ENCODE measurements at regions of chr3 and their contacts with region 1.

Region 1: DNA sequence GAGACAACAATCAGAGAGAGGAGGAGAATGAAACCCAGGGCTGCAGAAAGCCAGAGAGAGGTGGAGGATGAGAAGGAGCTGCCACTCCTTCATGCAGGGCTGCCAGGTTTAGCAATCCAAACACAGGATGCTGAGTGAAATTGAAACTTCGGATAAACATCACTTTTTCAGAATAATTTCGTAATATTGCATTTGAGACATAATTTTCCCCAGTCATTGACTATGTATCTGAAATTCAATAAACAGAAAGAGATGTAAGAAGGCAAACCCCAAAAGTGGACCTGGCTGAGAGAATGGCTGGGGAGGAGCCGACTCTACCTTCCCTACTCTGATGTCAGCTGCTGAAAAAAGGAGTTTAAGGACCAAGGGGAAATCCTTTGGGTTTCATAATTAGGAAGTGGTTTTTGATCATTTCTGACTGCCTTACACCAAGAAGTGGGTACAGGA is 33.8 kb downstream of the SLC9A9 start:
- DNase-seq: no peak
- H3K4me3 Mint-ChIP-seq: peak overlapping the region; percentile 11
- H3K27ac Mint-ChIP-seq: peak overlapping the region; percentile 49
- H3K4me1 Mint-ChIP-seq: peaks cover 16% of the 10 kb centered on the region
- H3K27me3 Mint-ChIP-seq: no peaks in the 10 kb centered on the region

Region 2: GRCh38 chr3:143585720-143586456 is 228.6 kb before region 1 on chr3:
- intact Hi-C with region 1: no loop called
- DNase-seq: no peak
- H3K4me3 Mint-ChIP-seq: no peak overlapping the region
- H3K27ac Mint-ChIP-seq: peak overlapping the region; percentile 20
- H3K4me1 Mint-ChIP-seq: peaks cover 21% of the 10 kb centered on the region
- H3K27me3 Mint-ChIP-seq: no peaks in the 10 kb centered on the region

Region 3: DNA sequence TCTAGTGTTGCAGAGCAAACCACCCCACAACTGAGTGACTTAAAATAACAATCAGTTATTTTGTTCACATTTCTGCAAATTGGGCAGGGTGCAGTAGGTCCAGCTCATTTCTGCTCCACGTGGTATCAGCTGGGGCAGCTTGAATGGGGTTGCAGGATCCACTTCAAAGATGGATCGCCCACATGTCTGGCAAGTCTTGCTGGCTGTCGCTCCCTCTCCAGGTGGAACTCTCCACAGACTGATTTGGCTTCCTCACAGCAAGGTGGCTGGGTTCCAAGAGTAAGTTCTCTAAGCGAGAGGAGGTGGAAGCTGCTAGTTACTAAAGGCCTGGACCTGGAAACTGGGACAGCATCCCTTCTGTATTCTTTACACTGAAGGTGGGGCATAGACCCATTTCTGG is 179.5 kb before region 1 on chr3:
- intact Hi-C with region 1: no loop called
- DNase-seq: no peak
- H3K4me3 Mint-ChIP-seq: no peak overlapping the region
- H3K27ac Mint-ChIP-seq: no peak overlapping the region
- H3K4me1 Mint-ChIP-seq: no peaks in the 10 kb centered on the region
- H3K27me3 Mint-ChIP-seq: no peaks in the 10 kb centered on the region

Region 4: GRCh38 chr3:143831208-143831607 is 16.7 kb after region 1 on chr3:
- intact Hi-C with region 1: loop called (anchors 2 kb)
- DNase-seq: no peak
- H3K4me3 Mint-ChIP-seq: no peak overlapping the region
- H3K27ac Mint-ChIP-seq: no peak overlapping the region
- H3K4me1 Mint-ChIP-seq: peaks cover 43% of the 10 kb centered on the region
- H3K27me3 Mint-ChIP-seq: no peaks in the 10 kb centered on the region

Measured in activated T-helper 1 cell treated with anti-CD3 and anti-CD28 coated beads, Interleukin-12 subunit alpha, Interleukin-12 subunit beta, Interleukin-2, Interleukin-4 antibody, amounts not matched to agents 30 ng/mL and 10 ng/mL and 1 ng/mL, durations not matched to agents 14 hours and 24 hours and 36 hours (primary cell).